A673 (cell line): ENCODE measurements at regions of chr12 and their contacts with region 1.

Region 1: DNA sequence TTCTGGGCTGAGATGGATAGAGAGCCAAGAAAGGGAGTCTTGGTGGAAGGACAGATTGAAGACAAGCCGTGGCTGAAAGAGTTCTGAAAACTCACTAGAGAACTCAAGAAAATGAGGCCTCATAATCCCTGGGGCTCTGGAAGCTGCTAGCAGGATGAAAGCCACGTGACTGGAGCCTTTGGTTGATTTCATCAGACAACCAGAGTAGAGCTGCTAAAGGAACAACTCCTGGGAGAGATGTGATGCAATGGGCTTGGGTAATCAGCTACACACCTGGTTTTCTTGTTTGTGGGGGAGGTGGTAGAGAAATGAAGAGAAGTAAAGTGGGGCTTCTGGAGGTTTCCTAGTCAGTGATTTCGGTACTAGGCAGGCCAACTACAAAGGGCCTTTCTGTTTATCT is 13.4 kb downstream of the CSRNP2 start:
- DNase-seq: peak; percentile 34
- H3K4me3 ChIP-seq: no peak overlapping the region
- H3K27ac ChIP-seq: peak overlapping the region; percentile 62
- H3K4me1 ChIP-seq: peaks cover 10% of the 10 kb centered on the region
- H3K27me3 ChIP-seq: no peaks in the 10 kb centered on the region
- CTCF ChIP-seq: no peak

Region 2: DNA sequence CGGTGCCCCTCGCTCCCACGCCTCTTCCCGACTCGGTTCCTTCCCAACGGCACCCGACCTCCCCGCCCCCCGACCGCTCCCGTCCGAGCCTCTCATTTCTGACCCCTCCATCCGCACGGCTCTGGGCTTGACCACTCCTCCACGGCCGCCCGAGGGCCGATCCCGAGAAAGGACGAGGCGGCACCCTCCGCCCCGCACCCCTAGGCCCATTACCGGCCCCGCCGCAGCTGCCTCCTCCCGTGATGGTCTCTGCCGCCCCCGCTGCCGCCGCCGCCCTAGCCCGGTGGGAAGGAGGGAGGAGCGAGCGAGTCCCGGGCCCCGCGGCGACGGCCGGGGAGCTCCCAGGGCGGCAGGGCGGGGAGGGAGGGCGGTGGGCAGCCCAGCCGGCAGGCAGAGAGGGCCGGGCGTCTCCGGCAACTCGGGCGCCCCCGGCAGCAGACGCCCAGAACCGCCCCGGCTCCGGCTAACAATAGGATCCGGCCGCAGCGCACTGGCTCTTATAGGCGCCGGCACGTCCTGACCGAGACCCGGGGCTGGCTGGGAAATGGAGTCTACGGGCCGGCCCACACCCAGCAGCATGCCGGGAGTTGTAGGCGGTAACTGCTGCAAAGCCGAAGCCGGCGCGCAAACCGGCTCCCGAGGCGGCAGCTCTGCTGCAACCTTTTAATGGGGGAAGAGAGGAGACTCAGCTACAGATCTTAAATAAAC is 13.3 kb after region 1 on chr12 and contains the start of gene CSRNP2:
- CTCF ChIA-PET with region 1: no interaction called
- POLR2A ChIA-PET with region 1: no interaction called
- intact Hi-C with region 1: no loop called
- DNase-seq: peak; percentile 98
- H3K4me3 ChIP-seq: peak within 1 kb of the TSS; percentile 100
- H3K27ac ChIP-seq: peak within 1 kb of the TSS; percentile 91
- H3K4me1 ChIP-seq: peaks cover 4% of the 10 kb centered on the region
- H3K27me3 ChIP-seq: no peaks in the 10 kb centered on the region
- CTCF ChIP-seq: no peak
- total RNA-seq, gene CSRNP2: 38.8 and 41.5 TPM in 2 replicates

Region 3: DNA sequence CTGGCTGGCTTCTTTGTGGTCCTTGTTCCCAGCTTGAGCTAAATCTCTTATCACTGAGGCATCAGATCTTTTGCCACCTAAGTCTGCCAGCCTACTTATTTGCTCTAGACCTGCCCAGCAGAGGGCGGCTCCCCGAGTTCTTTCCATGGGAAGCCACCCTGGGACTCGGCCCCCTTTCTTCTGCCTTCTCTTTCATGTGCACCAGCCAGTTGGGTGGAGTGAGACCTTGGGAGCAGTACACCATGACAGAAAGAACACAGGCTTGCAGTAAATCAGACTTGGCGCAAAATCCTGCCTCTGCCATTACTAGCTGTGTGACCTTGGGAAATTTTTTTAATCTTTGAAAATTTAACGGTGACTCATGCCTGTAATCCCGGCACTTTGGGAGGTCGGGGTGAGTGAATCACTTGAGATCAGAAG is 192.8 kb after region 1 on chr12:
- CTCF ChIA-PET with region 1: no interaction called
- POLR2A ChIA-PET with region 1: interaction called, 12 read pairs
- intact Hi-C with region 1: no loop called
- DNase-seq: peak; percentile 81
- H3K4me3 ChIP-seq: no peak overlapping the region
- H3K27ac ChIP-seq: peak overlapping the region; percentile 30
- H3K4me1 ChIP-seq: peaks cover 13% of the 10 kb centered on the region
- H3K27me3 ChIP-seq: no peaks in the 10 kb centered on the region
- CTCF ChIP-seq: peak; percentile 69

Region 4: DNA sequence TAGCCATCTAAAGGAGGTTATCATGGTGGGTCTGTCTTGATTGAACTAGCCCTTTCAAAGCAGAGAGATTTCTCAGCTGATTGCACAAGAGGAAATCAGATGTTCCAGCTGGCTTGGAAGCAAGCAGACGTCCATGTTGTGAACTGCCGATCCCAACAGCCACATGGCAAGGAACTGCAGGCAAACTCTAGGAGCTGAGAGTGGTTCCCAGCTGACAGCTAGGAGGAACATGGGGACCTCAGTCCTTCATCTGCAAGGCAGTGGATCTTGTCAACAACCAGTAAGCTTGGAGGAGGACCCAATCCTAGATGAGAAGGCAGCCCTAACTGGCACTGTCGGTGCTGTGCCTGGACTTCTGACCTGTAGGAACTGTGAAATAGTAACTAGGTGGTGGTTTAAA is 889.2 kb after region 1 on chr12:
- CTCF ChIA-PET with region 1: no interaction called
- POLR2A ChIA-PET with region 1: no interaction called
- intact Hi-C with region 1: no loop called
- DNase-seq: no peak
- H3K4me3 ChIP-seq: no peak overlapping the region
- H3K27ac ChIP-seq: peak overlapping the region; percentile 22
- H3K4me1 ChIP-seq: peaks cover 9% of the 10 kb centered on the region
- H3K27me3 ChIP-seq: no peaks in the 10 kb centered on the region
- CTCF ChIP-seq: no peak